T-cell (primary cell): ENCODE measurements at regions of chr11 and their contacts with region 1.

Region 1: GRCh38 chr11:110069158-110069737 is 23.9 kb upstream of the ZC3H12C start:
- DNase-seq: no peak
- ATAC-seq: no peak
- H3K4me3 ChIP-seq: no peak overlapping the region
- H3K4me3 Mint-ChIP-seq: no peak overlapping the region
- H3K27ac ChIP-seq: no peak overlapping the region
- H3K27ac Mint-ChIP-seq: no peak overlapping the region
- H3K4me1 ChIP-seq: no peaks in the 10 kb centered on the region
- H3K4me1 Mint-ChIP-seq: no peaks in the 10 kb centered on the region
- H3K27me3 ChIP-seq: no peaks in the 10 kb centered on the region
- H3K27me3 Mint-ChIP-seq: peaks cover 9 to 19% of the 10 kb centered on the region in 2 donors

Region 2: GRCh38 chr11:109973486-109973885 is 95.8 kb before region 1 on chr11:
- CTCF ChIA-PET with region 1: interaction called in 1 of 2 experiments, 12 read pairs
- POLR2A ChIA-PET with region 1: no interaction called
- DNase-seq: no peak
- ATAC-seq: no peak
- H3K4me3 ChIP-seq: no peak overlapping the region
- H3K4me3 Mint-ChIP-seq: no peak overlapping the region
- H3K27ac ChIP-seq: no peak overlapping the region
- H3K27ac Mint-ChIP-seq: no peak overlapping the region
- H3K4me1 ChIP-seq: peaks cover 0 to 23% of the 10 kb centered on the region in 2 experiments
- H3K4me1 Mint-ChIP-seq: peaks cover 6 to 10% (median 6%) of the 10 kb centered on the region in 3 donors
- H3K27me3 ChIP-seq: no peaks in the 10 kb centered on the region
- H3K27me3 Mint-ChIP-seq: peaks cover 0 to 6% of the 10 kb centered on the region in 2 donors

Region 3: GRCh38 chr11:110046775-110047380 is 22.4 kb before region 1 on chr11:
- CTCF ChIA-PET with region 1: no interaction called
- POLR2A ChIA-PET with region 1: no interaction called
- DNase-seq: no peak
- ATAC-seq: no peak
- H3K4me3 ChIP-seq: no peak overlapping the region
- H3K4me3 Mint-ChIP-seq: no peak overlapping the region
- H3K27ac ChIP-seq: no peak overlapping the region
- H3K27ac Mint-ChIP-seq: no peak overlapping the region
- H3K4me1 ChIP-seq: no peaks in the 10 kb centered on the region
- H3K4me1 Mint-ChIP-seq: no peaks in the 10 kb centered on the region
- H3K27me3 ChIP-seq: peaks cover 0 to 11% of the 10 kb centered on the region in 2 experiments
- H3K27me3 Mint-ChIP-seq: peaks cover 5 to 8% of the 10 kb centered on the region in 2 donors